WTC11 (cell line): ENCODE measurements at regions of chr2 and their contacts with region 1.

Region 1: GRCh38 chr2:191976436-191976835 is 129.5 kb upstream of the CAVIN2 start:
- DNase-seq: no peak
- ATAC-seq: no peak
- H3K4me3 Mint-ChIP-seq: no peak overlapping the region
- H3K27ac Mint-ChIP-seq: no peak overlapping the region
- H3K4me1 Mint-ChIP-seq: peaks cover 35% of the 10 kb centered on the region
- H3K27me3 Mint-ChIP-seq: no peaks in the 10 kb centered on the region
- CTCF ChIP-seq: no peak

Region 2: GRCh38 chr2:191746346-191747169 is 229.9 kb before region 1 on chr2:
- CTCF ChIA-PET with region 1: no interaction called
- POLR2A ChIA-PET with region 1: interaction called, 11 read pairs
- DNase-seq: no peak
- ATAC-seq: no peak
- H3K4me3 Mint-ChIP-seq: no peak overlapping the region
- H3K27ac Mint-ChIP-seq: no peak overlapping the region
- H3K4me1 Mint-ChIP-seq: peaks cover 4% of the 10 kb centered on the region
- H3K27me3 Mint-ChIP-seq: no peaks in the 10 kb centered on the region
- CTCF ChIP-seq: no peak

Region 3: GRCh38 chr2:191965733-191966132 is 10.7 kb before region 1 on chr2:
- CTCF ChIA-PET with region 1: no interaction called
- POLR2A ChIA-PET with region 1: no interaction called
- DNase-seq: no peak
- ATAC-seq: no peak
- H3K4me3 Mint-ChIP-seq: no peak overlapping the region
- H3K27ac Mint-ChIP-seq: no peak overlapping the region
- H3K4me1 Mint-ChIP-seq: no peaks in the 10 kb centered on the region
- H3K27me3 Mint-ChIP-seq: no peaks in the 10 kb centered on the region
- CTCF ChIP-seq: no peak

Region 4: DNA sequence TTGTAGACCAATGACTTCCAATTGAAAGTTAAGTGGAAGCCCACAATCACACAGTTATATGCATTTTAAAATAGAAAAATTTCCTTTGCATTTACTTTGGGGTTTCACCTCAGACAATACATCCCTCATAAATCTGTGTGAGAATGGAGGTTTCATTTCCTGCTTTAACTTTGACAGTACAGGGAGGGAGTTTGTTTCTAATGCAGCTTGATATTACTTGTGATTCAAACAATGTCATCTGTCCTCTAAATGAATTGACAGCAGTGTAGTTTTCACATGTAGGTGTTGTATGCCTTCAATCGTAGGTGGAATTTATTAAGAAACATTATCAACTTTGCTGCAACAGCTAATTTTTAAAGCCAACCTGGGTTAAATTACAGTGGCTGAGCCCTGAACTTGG is 143.1 kb after region 1 on chr2:
- CTCF ChIA-PET with region 1: no interaction called
- POLR2A ChIA-PET with region 1: no interaction called
- DNase-seq: no peak
- ATAC-seq: no peak
- H3K4me3 Mint-ChIP-seq: no peak overlapping the region
- H3K27ac Mint-ChIP-seq: no peak overlapping the region
- H3K4me1 Mint-ChIP-seq: 0 out of 2 replicates have a peak, but pooled peaks cover 8% of the 10 kb centered on the region
- H3K27me3 Mint-ChIP-seq: no peaks in the 10 kb centered on the region
- CTCF ChIP-seq: no peak